ENCODE measurements at regions of chr5 and their contacts with region 1.

Region 1: GRCh38 chr5:134184155-134185135 is 7.7 kb upstream of the SKP1 start:
- DNase-seq: peak; percentile 87
- ATAC-seq: peak; percentile 98
- H3K4me3 Mint-ChIP-seq: no peak overlapping the region
- H3K27ac Mint-ChIP-seq: no peak overlapping the region
- H3K4me1 Mint-ChIP-seq: no peaks in the 10 kb centered on the region
- H3K27me3 Mint-ChIP-seq: no peaks in the 10 kb centered on the region; the same call in 1 of the 2 replicates
- CTCF ChIP-seq: peak; percentile 87

Region 2: DNA sequence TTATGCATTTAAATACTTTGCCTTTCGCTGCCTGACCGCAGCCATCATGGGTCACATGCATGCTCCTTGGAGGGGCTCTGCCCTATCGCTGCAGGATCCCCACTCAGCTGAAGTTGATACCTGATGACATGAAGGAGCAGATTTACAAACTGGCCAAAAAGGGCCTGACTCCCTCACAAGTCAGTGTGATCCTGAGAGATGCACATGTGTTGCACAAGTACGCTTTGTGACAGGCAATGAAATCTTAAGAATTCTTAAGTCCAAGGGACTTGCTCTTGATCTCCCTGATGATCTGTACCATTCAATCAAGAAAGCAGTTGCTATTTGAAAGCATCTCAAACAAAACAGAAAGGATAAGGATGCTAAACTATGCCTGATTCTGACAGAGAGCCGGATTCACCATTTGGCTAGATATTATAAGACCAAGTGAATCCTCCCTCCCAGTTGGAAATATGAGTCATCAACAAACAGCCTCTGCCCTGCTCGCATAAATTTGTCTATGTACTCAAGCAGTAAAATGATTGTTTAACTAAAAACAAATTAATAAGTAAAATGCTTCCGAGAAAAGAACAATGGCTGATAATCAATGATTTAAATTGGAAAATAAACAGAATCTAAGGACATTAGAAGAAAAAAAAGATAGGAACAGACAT is 83.0 kb after region 1 on chr5:
- CTCF ChIA-PET with region 1: no interaction called
- POLR2A ChIA-PET with region 1: no interaction called
- DNase-seq: no peak
- ATAC-seq: no peak
- H3K4me3 Mint-ChIP-seq: no peak overlapping the region
- H3K27ac Mint-ChIP-seq: no peak overlapping the region
- H3K4me1 Mint-ChIP-seq: no peaks in the 10 kb centered on the region
- H3K27me3 Mint-ChIP-seq: peaks cover 7% of the 10 kb centered on the region
- CTCF ChIP-seq: no peak

Region 3: GRCh38 chr5:134289509-134290113 is 105.2 kb after region 1 on chr5:
- CTCF ChIA-PET with region 1: interaction called, 15 read pairs
- POLR2A ChIA-PET with region 1: no interaction called
- DNase-seq: peak; percentile 50
- ATAC-seq: peak; percentile 100
- H3K4me3 Mint-ChIP-seq: no peak overlapping the region
- H3K27ac Mint-ChIP-seq: no peak overlapping the region
- H3K4me1 Mint-ChIP-seq: no peaks in the 10 kb centered on the region
- H3K27me3 Mint-ChIP-seq: peaks cover 19% of the 10 kb centered on the region
- CTCF ChIP-seq: peak; percentile 55